Left cardiac atrium (tissue), 4 donors: ENCODE measurements at regions of chr12 and their contacts with region 1.

Region 1: DNA sequence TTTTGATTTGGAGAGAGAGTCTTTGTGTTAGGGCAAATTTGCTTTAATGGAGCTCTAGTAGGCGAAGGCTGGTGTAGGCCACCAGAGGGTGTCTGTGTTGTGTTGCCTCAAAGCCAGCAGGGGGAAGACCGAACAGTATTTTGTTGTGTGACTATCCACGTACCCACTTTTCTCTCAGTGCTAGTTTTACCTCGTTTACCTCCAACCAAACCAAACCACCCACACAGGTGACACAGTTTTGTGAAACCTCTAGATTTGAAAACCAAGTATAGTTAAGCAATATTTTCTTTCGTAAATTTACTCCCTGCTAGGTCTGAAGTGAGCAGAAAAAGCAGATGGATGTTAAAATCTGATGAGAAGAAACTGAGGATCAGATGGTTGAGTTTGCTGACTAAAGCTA is 36.3 kb upstream of the NPFF start:
- DNase-seq: peak; percentile 61
- ATAC-seq: peak; percentile 93 to 96

Region 2: GRCh38 chr12:52884526-52885293 is 658.8 kb before region 1 on chr12:
- intact Hi-C with region 1: no loop called
- DNase-seq: peak; percentile 82
- ATAC-seq: peak; percentile 83 to 85

Region 3: DNA sequence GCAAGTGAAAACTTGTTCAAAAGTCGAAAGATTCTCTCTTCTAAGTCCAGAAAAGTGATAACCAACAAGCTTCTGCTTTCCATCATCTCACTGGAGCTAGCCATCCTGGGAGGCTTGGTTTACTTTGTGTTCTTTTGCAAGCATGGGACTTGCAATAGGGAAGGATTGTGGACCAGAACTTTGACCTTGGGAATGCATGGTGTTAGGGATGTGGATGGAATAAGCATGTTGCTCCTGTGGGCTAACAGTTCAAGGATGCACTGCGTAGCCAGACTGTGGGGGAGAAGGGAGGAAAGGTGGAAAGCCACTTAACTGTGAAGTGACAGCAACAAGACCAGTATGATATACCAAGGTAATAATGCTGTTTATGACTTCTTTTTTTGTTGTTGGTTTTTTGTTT is 411.7 kb before region 1 on chr12:
- intact Hi-C with region 1: no loop called
- DNase-seq: no peak
- ATAC-seq: no peak

Region 4: GRCh38 chr12:53451661-53452158 is 91.8 kb before region 1 on chr12 and contains the start of gene PCBP2:
- intact Hi-C with region 1: no loop called
- DNase-seq: peak; percentile 98
- ATAC-seq: peak; percentile 97 to 98
- total RNA-seq, gene PCBP2: 504 to 545 TPM

Region 5: DNA sequence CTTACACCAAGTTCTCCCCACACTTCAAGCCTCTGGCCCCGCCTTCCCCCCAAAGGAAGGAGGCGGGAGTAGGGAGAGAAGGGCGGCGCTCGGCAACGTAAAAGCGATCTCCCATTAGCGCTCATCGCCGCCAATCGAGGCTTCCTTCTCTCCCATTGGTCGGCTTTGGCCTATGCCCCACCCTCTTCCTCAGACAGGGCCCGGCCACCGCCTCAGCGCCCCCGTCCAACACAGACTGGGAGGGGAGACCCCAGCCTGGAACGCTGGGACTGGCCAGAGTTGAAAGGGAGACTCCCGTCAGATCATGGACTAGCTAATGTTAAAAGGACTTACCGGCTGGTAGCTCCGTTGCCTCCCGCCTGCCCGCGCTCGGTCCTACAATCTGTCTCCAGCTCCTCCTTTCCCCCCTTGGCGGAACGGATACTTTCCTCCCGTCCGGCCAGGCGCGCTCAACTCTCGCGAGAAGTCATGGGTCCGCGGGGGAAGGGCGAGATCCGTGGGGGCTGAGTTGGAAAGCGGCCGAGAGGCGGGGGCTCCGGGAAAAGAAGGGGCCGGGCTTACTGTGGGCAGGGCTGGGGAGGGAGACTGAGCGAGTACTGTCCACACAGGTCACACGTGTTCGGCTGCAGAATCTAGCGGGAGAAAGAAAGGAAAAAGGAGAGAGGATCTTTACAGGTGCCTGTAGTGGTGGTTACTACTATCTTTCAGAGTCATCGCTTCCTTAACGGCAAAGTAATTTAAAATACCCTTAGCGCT is 82.6 kb after region 1 on chr12 and contains the start of gene ATF7:
- intact Hi-C with region 1: loop called in 1 of 2 experiments (anchors 5 kb)
- DNase-seq: peak; percentile 97
- ATAC-seq: peak; percentile 98 to 99
- total RNA-seq, gene ATF7: 30.1 to 34.7 TPM